AG04450 (cell line): ENCODE measurements at regions of chr4 and their contacts with region 1.

Region 1: DNA sequence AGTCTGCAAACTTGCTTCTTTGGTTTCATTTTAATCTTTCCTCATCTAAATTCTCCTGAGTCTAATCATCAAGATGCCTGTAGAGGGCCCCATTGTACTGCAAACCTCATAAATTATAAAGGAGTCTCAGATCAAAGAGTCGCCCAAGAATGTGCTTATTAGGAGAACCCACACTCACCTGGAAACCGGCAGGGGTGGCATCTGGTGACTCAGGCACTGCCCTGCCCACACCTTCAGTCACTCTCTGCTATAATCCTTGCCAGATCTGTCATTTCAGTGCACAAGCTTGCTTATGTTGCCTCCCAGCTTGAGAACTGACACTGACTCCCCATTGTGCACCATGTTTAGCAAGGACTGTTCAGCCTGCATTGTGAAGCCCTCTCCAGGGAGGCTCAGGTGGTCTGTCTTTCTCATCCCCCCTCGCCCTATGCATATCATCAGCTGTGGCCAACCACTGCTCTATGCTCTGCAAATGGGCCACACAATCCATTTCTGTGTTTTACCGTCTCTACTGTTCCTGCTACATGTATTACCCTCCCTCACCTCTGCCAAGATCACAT is 12.4 kb downstream of the EPGN start:
- DNase-seq: peak; percentile 46
- H3K4me3 ChIP-seq: no peak overlapping the region
- H3K27ac ChIP-seq: no peak overlapping the region
- H3K27me3 ChIP-seq: no peaks in the 10 kb centered on the region
- CTCF ChIP-seq: peak; percentile 69

Region 2: DNA sequence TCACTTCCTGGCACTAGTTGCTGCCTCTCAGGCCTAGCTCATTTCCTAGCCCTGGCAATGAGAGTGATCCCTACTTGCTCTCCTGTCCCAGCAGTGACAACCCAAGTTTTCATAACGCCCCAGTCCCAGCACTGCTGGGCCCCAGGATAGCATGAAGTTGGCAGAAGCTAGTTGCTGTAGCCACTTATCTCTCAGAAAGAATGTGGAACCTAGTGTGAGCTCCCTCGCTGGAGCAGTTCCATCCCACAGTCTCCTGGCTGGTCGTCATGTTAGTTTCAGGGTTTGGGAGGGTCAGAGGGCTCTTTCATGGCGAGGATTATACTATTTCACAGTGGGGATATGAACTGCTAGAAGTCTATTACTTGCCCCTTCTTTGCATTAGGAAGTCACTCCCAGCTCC is 343.9 kb before region 1 on chr4:
- CTCF ChIA-PET with region 1: no interaction called
- POLR2A ChIA-PET with region 1: no interaction called
- DNase-seq: no peak
- H3K4me3 ChIP-seq: no peak overlapping the region
- H3K27ac ChIP-seq: no peak overlapping the region
- H3K27me3 ChIP-seq: no peaks in the 10 kb centered on the region
- CTCF ChIP-seq: no peak

Region 3: GRCh38 chr4:74278490-74278889 is 42.1 kb before region 1 on chr4:
- CTCF ChIA-PET with region 1: no interaction called
- POLR2A ChIA-PET with region 1: no interaction called
- DNase-seq: no peak
- H3K4me3 ChIP-seq: no peak overlapping the region
- H3K27ac ChIP-seq: no peak overlapping the region
- H3K27me3 ChIP-seq: no peaks in the 10 kb centered on the region
- CTCF ChIP-seq: no peak

Region 4: DNA sequence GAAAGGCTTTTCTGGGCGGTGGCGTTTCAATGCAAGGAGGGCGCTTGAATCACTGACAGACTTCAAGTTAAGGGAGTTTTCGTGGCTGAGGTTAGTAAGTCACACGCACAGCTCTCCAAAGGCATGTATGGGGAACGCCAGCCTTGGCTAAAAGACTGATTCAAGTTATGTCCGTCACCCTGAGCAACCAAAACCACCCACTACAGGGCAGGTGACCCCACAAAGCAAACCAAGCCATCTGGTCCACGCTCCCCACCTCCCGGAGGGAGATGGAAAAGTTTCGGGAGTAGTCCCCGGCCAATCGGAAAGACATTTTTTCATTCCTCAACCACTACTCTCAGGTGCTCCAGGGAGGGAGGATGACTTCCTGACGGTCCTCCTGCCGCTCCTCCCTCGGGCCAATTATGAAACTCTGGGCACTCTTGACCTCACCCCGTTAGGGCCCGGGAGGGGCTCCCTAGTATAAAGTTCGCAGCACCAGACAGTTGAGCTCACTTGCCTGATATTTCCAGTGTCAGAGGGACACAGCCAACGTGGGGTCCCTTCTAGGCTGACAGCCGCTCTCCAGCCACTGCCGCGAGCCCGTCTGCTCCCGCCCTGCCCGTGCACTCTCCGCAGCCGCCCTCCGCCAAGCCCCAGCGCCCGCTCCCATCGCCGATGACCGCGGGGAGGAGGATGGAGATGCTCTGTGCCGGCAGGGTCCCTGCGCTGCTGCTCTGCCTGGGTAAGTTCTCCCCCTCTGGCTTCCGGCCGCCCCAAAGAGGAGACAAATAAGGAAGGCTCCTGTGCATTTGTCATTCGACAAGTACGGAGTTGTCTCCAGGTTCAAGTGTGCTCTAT is 44.2 kb after region 1 on chr4 and contains the start of gene EREG:
- CTCF ChIA-PET with region 1: interaction called, 17 read pairs
- POLR2A ChIA-PET with region 1: no interaction called
- DNase-seq: no peak
- H3K4me3 ChIP-seq: peak within 1 kb of the TSS; percentile 65
- H3K27ac ChIP-seq: peak within 1 kb of the TSS; percentile 55
- H3K27me3 ChIP-seq: no peaks in the 10 kb centered on the region
- CTCF ChIP-seq: no peak
- polyA plus RNA-seq, gene EREG: 1.5 and 1.8 TPM in 2 replicates

Region 5: DNA sequence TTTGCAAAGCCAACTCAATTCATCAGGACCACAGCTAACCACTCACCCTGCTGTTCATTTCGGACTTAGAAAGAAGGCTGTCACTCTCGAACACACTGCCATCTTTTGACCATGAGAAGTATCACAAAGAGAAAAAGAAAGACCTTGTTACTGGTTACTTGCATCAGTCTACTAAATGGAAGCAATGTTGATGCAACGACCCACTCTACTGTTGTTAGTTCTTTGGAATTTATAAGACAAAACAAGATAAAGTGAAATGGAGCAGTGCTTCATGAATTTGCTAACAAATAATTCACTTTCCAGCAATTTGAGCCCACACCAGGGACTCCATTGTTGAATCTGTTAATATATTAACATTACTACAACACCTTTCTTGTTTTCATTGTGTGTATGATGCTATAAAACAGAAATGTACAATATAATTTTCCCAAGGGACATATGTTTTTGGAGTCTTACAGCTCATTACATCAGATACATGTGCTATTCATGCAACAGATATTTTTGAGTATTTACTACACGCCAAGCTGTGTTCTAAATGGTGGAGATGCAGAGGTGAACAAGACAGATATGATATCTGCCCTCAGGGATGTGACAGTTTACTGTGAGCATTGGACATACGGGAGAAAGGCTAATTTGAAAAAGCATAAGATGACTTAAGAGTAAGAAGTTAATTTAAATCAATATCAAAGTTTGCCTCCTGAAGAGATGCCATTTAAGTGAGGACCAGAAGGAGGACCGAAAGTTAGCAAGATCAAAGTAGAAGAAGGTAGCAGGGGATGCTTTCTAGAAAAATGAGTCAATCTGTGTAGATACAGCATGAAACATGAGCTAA is 211.5 kb after region 1 on chr4:
- CTCF ChIA-PET with region 1: interaction called, 19 read pairs
- POLR2A ChIA-PET with region 1: no interaction called
- DNase-seq: peak; percentile 59
- H3K4me3 ChIP-seq: no peak overlapping the region
- H3K27ac ChIP-seq: no peak overlapping the region
- H3K27me3 ChIP-seq: no peaks in the 10 kb centered on the region
- CTCF ChIP-seq: peak; percentile 64